Posterior vena cava (tissue), 2 donors: ENCODE measurements at regions of chr1 and their contacts with region 1.

Region 1: GRCh38 chr1:204565617-204566582 is 49.7 kb downstream of the MDM4 start:
- DNase-seq: no peak

Region 2: DNA sequence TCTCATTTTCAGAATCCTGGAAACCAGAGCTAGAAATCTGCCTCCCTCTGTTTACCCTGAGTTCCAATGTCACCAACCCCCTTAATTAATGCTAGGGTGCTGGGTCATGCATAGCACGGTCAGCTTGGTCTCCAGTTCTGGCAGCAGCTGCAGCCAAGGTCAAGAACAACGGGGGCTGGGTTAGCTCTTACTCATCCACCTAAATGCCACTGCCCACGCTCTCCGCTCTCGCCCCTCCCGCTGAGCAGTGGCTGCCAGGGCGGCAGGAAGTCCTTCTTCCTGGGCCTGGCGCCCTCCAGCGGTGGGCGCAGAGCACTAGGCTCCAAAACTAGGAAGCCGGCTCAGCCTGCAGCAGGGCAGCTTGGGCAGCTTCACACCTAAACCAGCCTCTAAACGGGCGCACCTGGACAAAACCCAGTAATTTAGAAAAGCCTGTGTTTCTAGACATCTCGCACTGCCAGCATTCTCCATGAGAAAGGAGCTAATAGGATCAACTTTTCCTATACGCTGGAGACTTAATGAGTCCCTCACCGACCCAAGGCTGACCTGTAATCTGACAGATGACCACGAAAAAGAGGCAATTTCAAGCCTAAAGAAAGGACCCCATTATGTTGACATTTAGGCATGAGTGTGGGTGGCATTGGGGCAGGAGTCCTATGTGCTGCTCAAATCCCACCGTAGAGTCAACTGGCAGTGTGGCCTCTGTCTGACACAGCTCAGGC is 198.0 kb after region 1 on chr1:
- intact Hi-C with region 1: loop called (anchors 2 to 10 kb)
- DNase-seq: peak; percentile 94

Region 3: DNA sequence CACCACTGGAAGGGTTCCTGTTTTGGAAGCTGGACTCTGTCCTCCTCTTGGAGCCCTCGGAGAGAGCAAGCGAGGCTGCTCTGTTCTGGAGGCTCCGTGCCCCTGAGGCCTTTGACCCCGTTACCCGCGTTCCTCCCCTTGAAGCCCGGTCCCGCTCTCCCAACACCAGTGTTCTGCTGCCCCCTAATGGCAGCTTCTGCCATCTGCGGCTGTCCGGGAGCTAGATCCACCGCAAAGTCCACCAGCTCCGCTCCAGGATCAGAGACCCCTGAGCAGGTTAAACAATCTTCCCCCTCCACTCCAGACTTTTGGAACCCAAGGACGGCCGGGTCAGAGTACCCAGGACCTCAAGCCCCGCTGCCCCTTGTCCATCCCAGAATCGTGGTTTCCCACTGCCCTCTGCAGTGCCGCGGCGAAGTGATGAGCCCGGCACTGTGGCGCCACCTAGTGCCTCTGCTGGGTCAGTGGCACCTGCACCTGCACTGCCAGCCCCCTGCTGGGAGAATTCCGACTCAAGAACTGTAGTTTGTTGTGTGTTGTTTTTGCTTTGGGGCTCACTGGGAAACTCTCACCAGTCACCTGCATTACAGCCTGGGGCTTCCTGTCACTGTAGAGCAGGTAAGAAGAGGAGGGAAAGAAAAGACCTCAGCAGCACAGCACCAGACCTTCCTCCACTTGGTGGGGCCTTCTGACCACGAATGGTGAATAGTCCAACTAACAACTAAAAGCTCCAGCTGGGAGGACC is 241.2 kb after region 1 on chr1:
- intact Hi-C with region 1: loop called (anchors 2 to 5 kb)
- DNase-seq: peak; percentile 91

Region 4: GRCh38 chr1:204941421-204942338 is 375.8 kb after region 1 on chr1:
- intact Hi-C with region 1: loop called in 1 of 2 experiments (anchors 10 kb)
- DNase-seq: peak; percentile 89